Activated B cell treated with CpG ODN at 0.5 μM for 24 hours (primary cell): ENCODE measurements at regions of chr21 and their contacts with region 1.

Region 1: GRCh38 chr21:37463083-37463801 is 96.7 kb downstream of the DYRK1A start:
- DNase-seq: no peak
- ATAC-seq: peak; percentile 76
- H3K4me3 Mint-ChIP-seq: peak overlapping the region; percentile 1
- H3K27ac Mint-ChIP-seq: peak overlapping the region; percentile 73
- H3K4me1 Mint-ChIP-seq: peaks cover 92% of the 10 kb centered on the region
- H3K27me3 Mint-ChIP-seq: no peaks in the 10 kb centered on the region
- CTCF ChIP-seq: no peak

Region 2: GRCh38 chr21:37429356-37429755 is 33.9 kb before region 1 on chr21:
- CTCF ChIA-PET with region 1: no interaction called
- POLR2A ChIA-PET with region 1: no interaction called
- intact Hi-C with region 1: loop called (anchors 5 kb)
- DNase-seq: no peak
- ATAC-seq: no peak
- H3K4me3 Mint-ChIP-seq: no peak overlapping the region
- H3K27ac Mint-ChIP-seq: no peak overlapping the region
- H3K4me1 Mint-ChIP-seq: peaks cover 55% of the 10 kb centered on the region
- H3K27me3 Mint-ChIP-seq: no peaks in the 10 kb centered on the region
- CTCF ChIP-seq: no peak

Region 3: DNA sequence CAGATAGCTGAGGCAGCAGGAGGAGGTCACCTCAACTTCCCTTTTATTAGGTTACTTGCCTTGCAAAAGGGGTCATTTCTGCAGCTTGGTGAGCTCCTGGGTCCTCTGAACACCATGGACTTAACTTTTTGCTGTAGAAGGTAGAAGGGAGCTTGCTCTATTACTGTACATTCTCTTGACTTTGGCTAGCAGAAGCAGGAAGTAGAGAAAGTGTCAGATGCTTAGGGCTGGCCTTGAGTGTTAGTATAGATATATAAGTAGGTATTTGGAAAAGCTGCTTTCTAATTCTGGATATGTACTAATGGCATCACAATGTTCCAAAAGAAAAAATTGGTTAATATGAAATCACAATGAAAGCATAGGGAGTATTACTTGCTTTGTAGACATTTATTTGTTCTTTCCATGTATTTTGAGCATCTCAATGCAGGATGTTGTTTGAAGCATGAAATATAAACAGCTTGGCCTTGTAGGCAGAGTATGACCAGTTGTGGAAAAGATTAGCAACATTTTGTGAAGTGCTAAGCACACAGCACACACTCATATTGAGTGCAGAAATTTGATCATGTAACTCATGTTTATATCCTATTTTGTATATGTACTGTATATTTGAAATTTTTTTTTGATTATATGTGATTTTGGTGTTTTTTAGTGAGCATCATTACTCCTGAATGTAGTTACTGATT is 12.1 kb after region 1 on chr21:
- CTCF ChIA-PET with region 1: interaction called, 10 read pairs
- POLR2A ChIA-PET with region 1: no interaction called
- intact Hi-C with region 1: no loop called
- DNase-seq: no peak
- ATAC-seq: peak; percentile 52
- H3K4me3 Mint-ChIP-seq: no peak overlapping the region
- H3K27ac Mint-ChIP-seq: peak overlapping the region; percentile 5
- H3K4me1 Mint-ChIP-seq: peaks cover 55% of the 10 kb centered on the region
- H3K27me3 Mint-ChIP-seq: no peaks in the 10 kb centered on the region
- CTCF ChIP-seq: no peak

Region 4: DNA sequence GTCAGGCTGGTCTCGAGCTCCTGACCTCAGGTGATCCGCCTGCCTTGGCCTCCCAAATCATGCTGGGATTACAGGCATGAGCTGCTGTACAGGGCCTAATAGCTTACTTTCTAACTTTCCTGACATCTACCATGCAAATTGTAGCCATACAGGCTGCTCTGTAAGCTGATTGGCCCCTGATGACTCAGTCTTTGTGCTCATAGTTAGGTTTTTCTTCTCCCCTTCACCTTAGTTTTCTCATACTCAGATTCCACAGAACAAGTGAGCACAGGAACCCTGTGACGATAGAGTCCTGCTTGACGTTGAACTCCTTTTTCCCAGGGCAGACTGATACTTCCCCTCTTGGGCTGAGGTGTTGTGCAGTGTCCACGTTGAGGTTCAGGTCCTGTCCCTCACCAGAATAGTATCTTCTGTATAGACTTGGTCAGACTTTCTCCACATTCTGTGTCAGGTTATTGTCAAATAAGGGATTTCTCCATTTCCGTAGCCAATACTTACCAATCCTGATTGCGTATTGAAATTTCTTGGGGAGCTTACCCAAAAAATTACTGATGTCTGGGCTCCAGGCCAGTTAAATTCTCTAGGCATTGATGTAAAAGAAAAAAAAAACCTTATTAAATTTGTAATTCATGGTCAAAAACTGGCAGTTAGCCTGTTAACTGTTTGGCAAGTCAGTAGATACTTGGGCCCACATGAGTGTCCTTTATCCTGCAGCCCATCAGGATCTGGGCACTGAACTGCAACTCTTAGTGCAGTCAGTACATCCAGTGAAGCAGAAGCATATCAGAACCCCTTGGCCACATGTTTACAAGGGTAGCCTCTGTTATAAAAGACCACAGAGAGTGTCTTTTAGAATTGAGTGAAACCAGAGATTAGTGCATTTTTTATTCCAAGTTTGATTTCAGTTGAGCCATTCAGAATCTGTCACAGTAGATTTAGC is 21.6 kb after region 1 on chr21:
- CTCF ChIA-PET with region 1: no interaction called
- POLR2A ChIA-PET with region 1: no interaction called
- intact Hi-C with region 1: loop called (anchors 2 kb)
- DNase-seq: no peak
- ATAC-seq: no peak
- H3K4me3 Mint-ChIP-seq: no peak overlapping the region
- H3K27ac Mint-ChIP-seq: no peak overlapping the region
- H3K4me1 Mint-ChIP-seq: no peaks in the 10 kb centered on the region
- H3K27me3 Mint-ChIP-seq: no peaks in the 10 kb centered on the region
- CTCF ChIP-seq: no peak